PC-9 (cell line): ENCODE measurements at regions of chr10 and their contacts with region 1.

Region 1: GRCh38 chr10:34994565-34995142 is 95.5 kb downstream of the CUL2 start:
- DNase-seq: peak; percentile 69 to 80
- H3K4me3 ChIP-seq: no peak overlapping the region
- H3K27ac ChIP-seq: no peak overlapping the region
- H3K4me1 ChIP-seq: peaks cover 28% of the 10 kb centered on the region
- H3K27me3 ChIP-seq: no peaks in the 10 kb centered on the region
- CTCF ChIP-seq: peak; percentile 78

Region 2: GRCh38 chr10:34889004-34889869 is 105.4 kb before region 1 on chr10:
- CTCF ChIA-PET with region 1: no interaction called
- POLR2A ChIA-PET with region 1: no interaction called
- intact Hi-C with region 1: loop called (anchors 5 kb)
- DNase-seq: peak; percentile 73 to 76
- H3K4me3 ChIP-seq: no peak overlapping the region
- H3K27ac ChIP-seq: peak overlapping the region; percentile 34; the same call in 1 of the 2 replicates
- H3K4me1 ChIP-seq: peaks cover 4% of the 10 kb centered on the region
- H3K27me3 ChIP-seq: no peaks in the 10 kb centered on the region
- CTCF ChIP-seq: no peak

Region 3: GRCh38 chr10:35027567-35027966 is 32.9 kb after region 1 on chr10:
- CTCF ChIA-PET with region 1: interaction called, 6 read pairs
- POLR2A ChIA-PET with region 1: interaction called, 3 read pairs
- intact Hi-C with region 1: loop called (anchors 2 kb)
- DNase-seq: no peak
- H3K4me3 ChIP-seq: no peak overlapping the region
- H3K27ac ChIP-seq: no peak overlapping the region
- H3K4me1 ChIP-seq: no peaks in the 10 kb centered on the region
- H3K27me3 ChIP-seq: no peaks in the 10 kb centered on the region
- CTCF ChIP-seq: peak; percentile 63